HepG2 (cell line): ENCODE measurements at regions of chr4 and their contacts with region 1.

Region 1: GRCh38 chr4:85968945-85969819 is 390.7 kb downstream of the MAPK10 start:
- DNase-seq: peak; percentile 33
- ATAC-seq: peak; percentile 31; the same call in 1 of the 3 replicates
- H3K4me3 ChIP-seq: no peak overlapping the region
- H3K27ac ChIP-seq: no peak overlapping the region
- H3K4me1 ChIP-seq: no peaks in the 10 kb centered on the region
- H3K27me3 ChIP-seq: no peaks in the 10 kb centered on the region
- CTCF ChIP-seq: peak; percentile 60
- EP300 ChIP-seq: no peak
- POLR2A ChIP-seq: no peak
- RAD21 ChIP-seq: no peak

Region 2: DNA sequence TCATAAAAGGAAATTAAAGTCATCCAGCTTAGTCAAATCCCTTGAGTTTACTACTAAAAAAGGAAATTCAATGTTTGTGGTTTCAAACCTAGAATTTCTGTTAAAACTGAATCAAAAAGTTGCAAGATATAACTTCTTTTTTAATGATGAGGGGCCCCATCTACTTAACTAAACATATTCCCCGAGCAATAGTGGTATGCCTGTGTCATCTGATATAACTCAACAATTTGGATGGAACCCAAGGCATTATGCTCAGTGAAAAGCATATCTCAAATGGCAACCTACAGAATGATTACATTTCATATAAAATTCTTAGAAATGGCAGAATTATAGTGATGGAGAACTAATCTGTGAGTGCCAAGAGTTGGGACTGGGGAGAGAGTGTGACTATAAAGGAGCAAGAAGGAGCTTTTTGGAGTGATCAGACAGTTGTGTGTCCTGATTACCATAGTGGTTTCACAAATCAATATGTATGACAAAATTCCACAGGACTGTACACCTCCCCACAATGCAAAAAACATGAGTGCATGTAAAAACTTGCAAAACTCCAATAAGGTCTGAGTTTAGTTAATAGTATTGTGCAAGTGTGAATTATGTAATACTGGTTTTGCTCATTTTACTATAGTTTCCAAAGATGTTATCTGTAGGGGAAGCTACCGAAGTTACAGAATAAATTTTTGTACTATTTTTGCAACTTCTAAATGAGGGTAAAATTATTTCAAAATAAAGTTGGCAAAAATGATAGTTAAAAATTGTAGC is 171.0 kb before region 1 on chr4:
- CTCF ChIA-PET with region 1: interaction called, 17 read pairs
- POLR2A ChIA-PET with region 1: no interaction called
- in situ Hi-C with region 1: loop called (anchors 5 kb)
- intact Hi-C with region 1: loop called (anchors 1 kb)
- DNase-seq: no peak
- ATAC-seq: no peak
- H3K4me3 ChIP-seq: no peak overlapping the region
- H3K27ac ChIP-seq: no peak overlapping the region
- H3K4me1 ChIP-seq: no peaks in the 10 kb centered on the region
- H3K27me3 ChIP-seq: no peaks in the 10 kb centered on the region
- CTCF ChIP-seq: no peak
- EP300 ChIP-seq: no peak
- POLR2A ChIP-seq: no peak
- RAD21 ChIP-seq: no peak

Region 3: GRCh38 chr4:85826060-85826678 is 143.0 kb before region 1 on chr4:
- CTCF ChIA-PET with region 1: no interaction called
- POLR2A ChIA-PET with region 1: no interaction called
- in situ Hi-C with region 1: no loop called
- intact Hi-C with region 1: loop called (anchors 10 kb)
- DNase-seq: peak; percentile 35
- ATAC-seq: peak; percentile 74
- H3K4me3 ChIP-seq: no peak overlapping the region
- H3K27ac ChIP-seq: no peak overlapping the region
- H3K4me1 ChIP-seq: no peaks in the 10 kb centered on the region
- H3K27me3 ChIP-seq: no peaks in the 10 kb centered on the region
- CTCF ChIP-seq: no peak
- EP300 ChIP-seq: no peak
- POLR2A ChIP-seq: no peak
- RAD21 ChIP-seq: no peak

Region 4: DNA sequence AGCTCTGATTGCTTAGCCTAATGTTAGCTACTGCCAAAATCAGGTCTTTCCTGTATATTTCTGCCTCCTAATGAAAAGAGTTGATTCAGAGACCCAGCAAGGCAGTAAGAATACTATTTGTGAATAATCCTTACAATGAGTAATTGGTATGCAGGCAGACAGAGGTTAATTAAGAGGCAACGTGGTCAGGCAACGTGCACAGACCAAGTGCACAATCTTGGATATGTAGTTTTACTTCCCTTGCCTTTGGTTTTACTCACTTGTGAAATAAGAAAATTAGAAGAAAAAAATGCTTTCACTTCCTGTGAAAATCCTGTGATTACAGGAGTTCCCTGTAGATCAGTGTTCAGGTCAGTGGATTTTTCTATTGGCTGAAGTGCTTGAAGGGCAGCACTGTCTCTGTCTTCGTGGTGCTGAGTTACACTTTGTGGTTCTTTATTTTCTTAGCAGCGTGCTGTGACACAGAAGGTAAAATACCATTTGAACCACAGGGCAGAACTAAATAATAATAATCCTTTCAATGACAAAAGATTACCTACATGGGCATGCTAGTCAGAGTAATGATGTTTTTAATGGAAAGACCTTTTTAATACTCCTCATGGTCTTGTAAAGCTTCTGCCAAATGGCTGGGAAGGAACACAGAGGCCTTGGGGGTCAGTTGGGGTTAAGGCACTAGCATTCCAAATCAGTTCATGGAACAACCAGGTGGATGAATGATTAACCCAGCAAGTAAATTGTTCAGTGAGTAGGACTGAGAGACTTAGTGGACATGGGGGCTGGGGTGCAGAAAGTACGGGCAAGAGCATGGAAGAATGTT is 40.2 kb before region 1 on chr4:
- CTCF ChIA-PET with region 1: no interaction called
- POLR2A ChIA-PET with region 1: no interaction called
- in situ Hi-C with region 1: no loop called
- intact Hi-C with region 1: no loop called
- DNase-seq: peak; percentile 54
- ATAC-seq: peak; percentile 98
- H3K4me3 ChIP-seq: peak overlapping the region in 2 of 3 experiments; percentile 31 to 50; a peak in 2 of 6 replicates
- H3K27ac ChIP-seq: no peak overlapping the region
- H3K4me1 ChIP-seq: peaks cover 25% of the 10 kb centered on the region
- H3K27me3 ChIP-seq: no peaks in the 10 kb centered on the region; a peak in 1 of 5 replicates
- CTCF ChIP-seq: no peak
- EP300 ChIP-seq: no peak
- POLR2A ChIP-seq: no peak
- RAD21 ChIP-seq: no peak